KBM-7 (cell line): ENCODE measurements at regions of chr13 and their contacts with region 1.

Region 1: GRCh38 chr13:98466634-98467236 is 110.2 kb downstream of the STK24 start:
- DNase-seq: peak; percentile 65

Region 2: GRCh38 chr13:98653463-98653985 is 186.8 kb after region 1 on chr13:
- in situ Hi-C with region 1: loop called (anchors 25 kb)
- DNase-seq: peak; percentile 73